AG04449 (cell line): ENCODE measurements at regions of chr1 and their contacts with region 1.

Region 1: DNA sequence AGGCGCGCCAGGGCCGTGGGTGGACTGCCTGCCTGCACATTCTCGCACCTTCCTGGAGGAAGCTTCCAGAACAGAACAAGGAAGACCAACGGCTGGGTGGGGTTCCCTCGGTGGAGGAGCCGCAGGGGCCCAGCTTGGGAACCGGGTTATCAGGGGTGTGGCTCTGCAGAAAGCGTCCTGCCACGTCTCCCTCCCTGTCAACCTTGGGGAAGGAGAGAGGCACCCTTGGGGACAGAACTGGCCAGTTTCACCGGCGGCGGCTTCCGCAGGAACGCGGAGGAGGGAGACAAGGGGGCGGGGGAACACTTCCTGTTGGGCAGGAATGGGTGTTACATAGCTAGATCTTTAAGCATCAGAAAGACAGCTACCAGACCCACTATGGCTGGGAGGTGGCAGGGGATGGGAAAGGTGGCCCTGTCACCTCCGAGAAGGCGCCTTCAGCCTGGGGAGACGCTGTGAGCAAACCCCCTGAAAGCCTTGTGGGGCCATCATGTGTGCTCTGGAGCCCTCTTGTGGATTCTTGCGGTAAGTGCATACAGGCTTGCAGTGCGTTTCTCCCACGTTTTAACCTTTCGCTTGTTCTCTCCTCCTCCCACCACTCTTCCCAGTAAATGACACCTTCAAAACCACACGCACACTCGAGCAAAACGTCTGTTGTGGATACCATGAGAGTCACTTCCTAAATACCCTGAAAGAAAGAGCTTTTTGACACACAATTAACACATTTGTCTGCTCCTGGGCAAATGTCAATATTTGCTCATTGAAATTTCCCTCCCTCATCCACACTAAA is 3.8 kb upstream of the PLEKHA6 start:
- DNase-seq: no peak
- H3K4me3 ChIP-seq: peak overlapping the region; percentile 50
- CTCF ChIP-seq: peak; percentile 92

Region 2: GRCh38 chr1:203871107-203871875 is 492.2 kb before region 1 on chr1:
- CTCF ChIA-PET with region 1: interaction called, 12 read pairs
- POLR2A ChIA-PET with region 1: no interaction called
- DNase-seq: no peak
- H3K4me3 ChIP-seq: no peak overlapping the region
- CTCF ChIP-seq: peak; percentile 91

Region 3: DNA sequence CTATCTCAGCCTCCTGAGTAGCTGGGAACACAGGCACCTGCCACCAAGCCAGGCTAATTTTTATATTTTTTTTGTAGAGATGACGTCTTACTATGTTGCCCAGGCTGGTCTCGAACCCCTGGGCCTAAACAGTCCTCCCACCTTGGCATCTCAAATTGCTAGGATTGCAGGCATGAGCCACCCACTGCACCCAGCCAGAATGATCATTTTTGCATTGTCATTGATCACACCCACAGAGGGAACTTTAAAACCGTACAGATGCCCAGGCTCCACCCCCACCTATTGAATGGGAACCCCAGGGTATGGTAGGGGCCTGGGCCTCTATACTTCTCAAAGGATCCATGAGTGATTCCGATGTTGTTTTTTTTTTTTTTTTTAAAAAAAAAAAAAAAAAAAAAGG is 248.4 kb before region 1 on chr1:
- CTCF ChIA-PET with region 1: no interaction called
- POLR2A ChIA-PET with region 1: no interaction called
- DNase-seq: no peak
- H3K4me3 ChIP-seq: no peak overlapping the region
- CTCF ChIP-seq: no peak

Region 4: GRCh38 chr1:204198151-204198994 is 165.2 kb before region 1 on chr1:
- CTCF ChIA-PET with region 1: interaction called, 124 read pairs
- POLR2A ChIA-PET with region 1: no interaction called
- DNase-seq: peak; percentile 53
- H3K4me3 ChIP-seq: no peak overlapping the region
- CTCF ChIP-seq: peak; percentile 17

Region 5: DNA sequence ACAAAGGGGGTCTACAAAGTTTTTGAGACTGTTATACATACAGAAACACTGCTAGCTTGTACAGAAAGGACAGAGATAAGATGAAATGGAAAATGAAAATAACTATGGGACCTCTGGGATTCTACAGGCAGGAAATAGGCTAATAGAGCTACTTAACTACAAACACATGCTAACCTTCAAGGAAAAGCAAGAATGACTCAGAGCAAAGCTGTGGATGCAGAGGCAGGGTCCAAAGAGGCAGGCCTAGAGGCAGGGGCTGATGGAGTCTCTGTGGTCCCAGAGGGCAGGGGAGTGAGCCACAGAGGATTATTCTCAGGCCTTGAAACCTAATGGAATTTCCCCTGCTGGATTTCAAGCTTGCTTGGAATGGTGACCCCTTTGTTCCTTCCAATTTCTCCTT is 131.0 kb before region 1 on chr1:
- CTCF ChIA-PET with region 1: interaction called, 30 read pairs
- POLR2A ChIA-PET with region 1: no interaction called
- DNase-seq: no peak
- H3K4me3 ChIP-seq: no peak overlapping the region
- CTCF ChIP-seq: no peak

Region 6: DNA sequence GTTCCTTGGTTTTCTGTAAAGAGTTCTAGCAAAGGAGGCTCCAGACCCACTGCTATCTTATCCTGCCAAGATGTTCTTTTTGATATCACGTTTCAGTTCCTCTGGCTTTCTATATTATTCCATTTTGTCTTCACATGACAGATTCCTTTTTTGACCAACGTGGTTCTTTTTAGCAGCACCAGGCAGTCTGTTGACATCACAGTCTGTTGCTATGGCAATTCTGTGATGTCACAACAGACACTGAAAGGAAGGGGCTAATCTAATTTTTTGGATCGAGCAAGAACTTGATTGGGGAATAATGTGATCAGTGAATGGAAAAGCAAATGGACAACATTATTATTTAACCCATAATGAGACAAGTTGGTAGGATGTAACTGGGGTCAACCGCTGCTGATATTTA is 85.3 kb before region 1 on chr1:
- CTCF ChIA-PET with region 1: interaction called, 10 read pairs
- POLR2A ChIA-PET with region 1: no interaction called
- DNase-seq: no peak
- H3K4me3 ChIP-seq: no peak overlapping the region
- CTCF ChIP-seq: no peak

Region 7: DNA sequence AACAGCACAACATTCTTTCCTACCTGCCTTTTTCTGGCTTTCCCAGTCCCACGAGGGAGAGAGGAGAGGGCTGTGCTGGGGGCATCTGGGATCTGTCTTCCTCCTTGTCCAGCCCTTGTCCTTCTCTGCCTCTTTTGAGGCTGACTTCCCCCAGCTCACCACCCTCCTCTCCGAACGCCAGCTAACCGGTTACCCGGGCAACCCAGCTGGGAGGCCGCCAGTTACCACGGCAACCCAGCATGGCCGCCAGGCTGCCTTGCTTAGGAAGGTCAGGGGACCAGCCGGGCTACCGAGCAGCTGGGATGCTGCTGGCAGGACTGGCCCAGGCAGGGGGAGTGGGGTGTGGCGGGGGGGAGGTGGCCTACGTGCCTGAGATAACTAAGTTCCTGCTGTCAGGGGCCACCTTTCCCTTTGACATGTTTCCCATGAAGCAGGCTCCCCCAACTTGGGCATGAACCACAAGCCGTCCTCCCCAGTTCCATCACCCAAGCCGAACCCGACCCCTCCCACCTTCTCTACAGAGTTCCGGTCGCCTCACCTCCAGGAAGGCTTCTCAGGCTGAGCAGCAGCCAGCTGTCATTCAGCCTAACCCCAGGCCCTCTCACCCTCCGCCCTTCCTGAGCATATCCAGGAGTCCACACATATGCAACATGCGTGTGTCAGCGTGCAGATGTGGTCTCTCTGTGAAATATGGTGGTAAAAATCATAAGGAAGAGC is 12.5 kb before region 1 on chr1:
- CTCF ChIA-PET with region 1: interaction called, 58 read pairs
- POLR2A ChIA-PET with region 1: no interaction called
- DNase-seq: no peak
- H3K4me3 ChIP-seq: peak overlapping the region; percentile 45
- CTCF ChIP-seq: no peak

Region 8: GRCh38 chr1:204506961-204507387 is 143.4 kb after region 1 on chr1:
- CTCF ChIA-PET with region 1: interaction called, 20 read pairs
- POLR2A ChIA-PET with region 1: no interaction called
- DNase-seq: peak; percentile 79
- H3K4me3 ChIP-seq: peak overlapping the region; percentile 55
- CTCF ChIP-seq: no peak